ENCODE measurements at regions of chr21 and their contacts with region 1.

Region 1: DNA sequence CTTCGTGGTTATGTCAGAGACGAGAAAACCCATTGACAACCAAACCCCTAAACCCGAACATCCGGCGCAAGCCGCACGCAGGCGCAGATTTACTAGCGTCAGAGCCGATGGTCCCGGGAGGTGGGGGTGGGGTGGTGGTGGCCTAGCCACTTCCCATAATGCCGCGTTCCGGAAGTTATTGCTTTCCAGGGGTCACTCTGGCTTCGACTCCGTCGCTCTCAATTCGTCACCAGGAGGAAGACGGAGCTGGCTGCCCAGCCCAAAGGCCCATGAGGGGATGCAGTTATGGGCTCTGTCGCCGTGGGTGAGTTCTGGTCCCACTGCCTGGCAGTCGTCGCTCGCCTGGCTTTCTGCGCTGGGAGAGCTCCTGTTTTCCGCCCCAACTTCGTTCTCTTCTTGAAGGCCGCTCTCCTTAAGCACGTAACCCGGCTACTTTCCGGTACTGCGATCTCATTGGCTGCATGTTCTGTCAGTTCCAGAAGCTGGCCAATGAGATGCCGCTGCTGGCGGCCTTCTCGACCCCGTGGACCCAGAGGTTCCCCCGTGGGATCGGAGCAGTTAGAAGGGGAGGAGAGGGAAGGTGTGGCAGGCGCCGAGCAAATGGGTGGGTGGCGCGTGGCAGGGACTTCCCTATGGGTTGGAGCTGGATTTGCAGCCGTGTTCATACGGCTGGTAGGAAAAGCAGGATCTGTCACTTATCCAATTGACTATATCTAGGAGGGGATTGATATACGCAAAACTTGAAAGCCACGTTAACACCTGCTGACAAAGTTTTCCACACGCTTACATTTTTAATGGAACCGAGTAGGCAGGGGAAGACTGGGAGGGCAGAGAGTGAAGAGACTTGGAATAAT is at the start of gene USP16:
- DNase-seq: peak; percentile 88
- H3K4me3 Mint-ChIP-seq: peak within 1 kb of the TSS; percentile 91
- H3K27ac Mint-ChIP-seq: peak within 1 kb of the TSS; percentile 98
- H3K4me1 Mint-ChIP-seq: peaks cover 9% of the 10 kb centered on the region
- H3K27me3 Mint-ChIP-seq: no peaks in the 10 kb centered on the region
- CTCF ChIP-seq: no peak
- total RNA-seq, gene USP16: 19.5 and 21.7 TPM in 2 replicates

Region 2: DNA sequence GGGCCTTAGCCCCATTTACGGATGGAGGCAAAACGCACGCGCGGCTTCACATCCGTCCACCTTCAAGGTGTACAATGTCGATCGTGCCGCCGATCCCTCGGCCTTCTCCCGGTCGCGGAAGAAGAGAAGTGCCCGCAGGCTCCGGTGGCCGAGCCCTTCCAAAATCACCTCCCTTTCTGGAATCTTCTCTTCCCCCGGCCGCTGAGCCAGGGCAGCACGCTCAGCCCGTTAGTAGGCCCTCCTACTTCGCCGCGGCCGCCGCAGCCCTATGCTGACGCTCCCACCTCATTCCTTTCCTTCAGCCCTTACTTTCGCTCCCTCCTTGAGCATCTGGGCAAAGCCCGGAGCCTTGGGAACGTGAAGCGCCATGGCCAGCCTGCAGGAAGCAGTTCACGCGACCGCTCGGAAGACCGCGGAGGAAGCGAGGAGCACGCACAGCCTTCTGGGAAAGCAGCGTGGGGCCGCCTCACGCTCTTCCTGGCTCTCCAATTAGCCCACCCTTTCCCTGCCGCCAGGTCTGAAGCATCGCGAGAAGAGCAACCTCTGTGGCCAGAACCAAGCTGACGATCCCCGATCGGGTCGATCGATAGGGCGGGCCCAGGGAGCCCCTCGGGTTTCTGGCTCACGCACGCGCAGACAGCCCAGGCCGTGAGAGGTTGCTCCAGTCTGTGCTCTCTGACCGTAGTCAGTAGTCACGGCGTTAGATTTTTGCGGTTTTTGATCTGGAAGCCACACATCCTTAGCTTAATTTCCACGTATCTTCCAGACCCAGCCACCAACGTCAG is 48.7 kb after region 1 on chr21 and contains the start of gene CCT8:
- CTCF ChIA-PET with region 1: no interaction called
- intact Hi-C with region 1: loop called (anchors 5 kb)
- DNase-seq: peak; percentile 95
- H3K4me3 Mint-ChIP-seq: peak within 1 kb of the TSS; percentile 100
- H3K27ac Mint-ChIP-seq: peak within 1 kb of the TSS; percentile 100
- H3K4me1 Mint-ChIP-seq: peaks cover 8% of the 10 kb centered on the region
- H3K27me3 Mint-ChIP-seq: no peaks in the 10 kb centered on the region
- CTCF ChIP-seq: no peak
- total RNA-seq, gene CCT8: 184 and 198 TPM in 2 replicates

Measured in Calu3 (cell line).